ENCODE measurements at regions of chr6 and their contacts with region 1.

Region 1: GRCh38 chr6:69146385-69146784 is 511.3 kb downstream of the ADGRB3 start:
- DNase-seq: no peak
- H3K4me3 ChIP-seq: no peak overlapping the region
- H3K27ac ChIP-seq: no peak overlapping the region
- H3K4me1 ChIP-seq: no peaks in the 10 kb centered on the region
- H3K27me3 ChIP-seq: no peaks in the 10 kb centered on the region
- CTCF ChIP-seq: no peak
- POLR2A ChIP-seq: no peak

Region 2: GRCh38 chr6:69116658-69117057 is 29.7 kb before region 1 on chr6:
- intact Hi-C with region 1: loop called (anchors 2 kb)
- DNase-seq: no peak
- H3K4me3 ChIP-seq: no peak overlapping the region
- H3K27ac ChIP-seq: no peak overlapping the region
- H3K4me1 ChIP-seq: no peaks in the 10 kb centered on the region
- H3K27me3 ChIP-seq: no peaks in the 10 kb centered on the region
- CTCF ChIP-seq: no peak
- POLR2A ChIP-seq: no peak